Activated CD8-positive, alpha-beta T cell treated with anti-CD3 and anti-CD28 coated beads for 36 hours (primary cell): ENCODE measurements at regions of chr15 and their contacts with region 1.

Region 1: GRCh38 chr15:60326824-60327654 is 70.7 kb downstream of the ANXA2 start:
- DNase-seq: peak; percentile 47
- ATAC-seq: peak; percentile 39
- H3K4me3 Mint-ChIP-seq: no peak overlapping the region
- H3K27ac Mint-ChIP-seq: no peak overlapping the region
- H3K4me1 Mint-ChIP-seq: no peaks in the 10 kb centered on the region
- H3K27me3 Mint-ChIP-seq: peaks cover 26% of the 10 kb centered on the region
- CTCF ChIP-seq: peak; percentile 92

Region 2: DNA sequence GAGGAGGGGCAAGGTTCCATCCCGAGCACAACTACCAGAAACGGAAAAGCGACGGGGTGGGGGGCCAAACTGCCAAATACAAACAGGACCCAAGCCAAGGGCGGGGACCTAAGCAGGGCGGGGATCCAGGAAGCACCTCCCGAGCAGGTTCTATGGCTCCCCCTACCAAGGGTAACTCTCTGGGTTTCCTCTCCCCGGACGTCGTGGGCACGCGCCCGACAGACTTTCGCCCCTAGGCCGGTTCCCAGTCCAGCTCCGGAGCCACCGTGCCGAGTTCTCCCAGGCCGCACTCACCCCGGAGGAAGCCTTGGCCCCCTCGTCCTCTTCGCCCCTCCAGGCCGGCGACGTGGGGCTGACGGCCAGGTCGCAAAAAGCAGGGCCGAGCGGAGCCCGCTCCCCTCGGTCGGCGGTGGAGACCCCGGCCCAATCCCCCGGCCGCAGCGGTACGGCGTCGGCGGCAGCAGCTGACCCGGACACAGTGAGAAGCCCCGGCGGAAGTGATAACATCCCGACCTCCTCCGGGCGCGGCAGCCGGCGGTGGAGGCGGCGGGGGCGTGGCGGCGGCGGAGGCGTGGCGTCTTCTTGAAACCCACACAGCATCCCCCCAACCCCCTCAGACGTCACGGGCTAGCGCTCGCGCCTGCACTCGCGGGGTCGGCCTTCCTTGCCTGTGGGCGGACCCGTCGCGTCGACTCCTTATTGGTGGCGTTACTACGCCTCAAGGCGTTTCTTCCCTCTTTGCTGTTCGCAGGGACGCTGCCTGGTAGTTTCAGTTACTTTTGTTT is 638.0 kb before region 1 on chr15 and contains the start of gene BNIP2:
- CTCF ChIA-PET with region 1: interaction called, 12 read pairs
- POLR2A ChIA-PET with region 1: no interaction called
- intact Hi-C with region 1: no loop called
- DNase-seq: peak; percentile 99
- ATAC-seq: peak; percentile 90
- H3K4me3 Mint-ChIP-seq: peak within 1 kb of the TSS; percentile 85
- H3K27ac Mint-ChIP-seq: peak within 1 kb of the TSS; percentile 96
- H3K4me1 Mint-ChIP-seq: peaks cover 44% of the 10 kb centered on the region
- H3K27me3 Mint-ChIP-seq: no peaks in the 10 kb centered on the region
- CTCF ChIP-seq: no peak
- total RNA-seq, gene BNIP2: 52.2 to 53.2 TPM

Region 3: GRCh38 chr15:59741274-59741906 is 585.6 kb before region 1 on chr15:
- CTCF ChIA-PET with region 1: interaction called, 14 read pairs
- POLR2A ChIA-PET with region 1: no interaction called
- intact Hi-C with region 1: loop called (anchors 10 kb)
- DNase-seq: no peak
- ATAC-seq: no peak
- H3K4me3 Mint-ChIP-seq: no peak overlapping the region
- H3K27ac Mint-ChIP-seq: no peak overlapping the region
- H3K4me1 Mint-ChIP-seq: no peaks in the 10 kb centered on the region
- H3K27me3 Mint-ChIP-seq: no peaks in the 10 kb centered on the region
- CTCF ChIP-seq: no peak

Region 4: DNA sequence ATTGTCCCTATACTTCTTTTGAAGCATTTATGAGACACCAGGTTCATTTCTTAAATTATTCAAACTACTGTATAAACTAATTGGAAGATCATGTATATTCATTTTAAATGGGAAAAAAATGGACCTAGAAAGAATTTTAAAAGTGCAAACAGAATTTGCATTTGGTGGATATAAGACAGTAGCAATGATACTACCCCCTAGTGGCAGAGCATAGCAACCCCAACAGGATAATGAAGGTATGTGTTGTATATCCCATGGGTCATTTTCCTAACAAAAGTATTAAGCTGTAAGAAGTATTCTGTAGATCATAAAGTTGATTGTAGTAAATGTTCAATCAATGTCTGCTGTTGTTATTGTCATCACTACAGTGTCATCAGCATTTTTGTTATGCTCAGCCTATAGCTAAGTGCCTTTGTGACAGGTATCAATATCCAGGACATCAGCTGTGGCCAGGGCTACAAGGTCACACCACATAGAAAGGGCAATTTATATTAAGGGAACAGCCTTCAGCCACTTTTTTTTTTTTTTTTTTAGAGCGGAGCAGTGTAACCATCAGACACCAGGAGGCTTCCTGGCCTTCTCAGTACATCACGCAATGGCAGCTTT is 147.2 kb before region 1 on chr15:
- CTCF ChIA-PET with region 1: interaction called, 7 read pairs
- POLR2A ChIA-PET with region 1: no interaction called
- intact Hi-C with region 1: loop called (anchors 10 kb)
- DNase-seq: peak; percentile 61
- ATAC-seq: peak; percentile 68
- H3K4me3 Mint-ChIP-seq: no peak overlapping the region
- H3K27ac Mint-ChIP-seq: no peak overlapping the region
- H3K4me1 Mint-ChIP-seq: no peaks in the 10 kb centered on the region
- H3K27me3 Mint-ChIP-seq: peaks cover 15% of the 10 kb centered on the region
- CTCF ChIP-seq: peak; percentile 96

Region 5: DNA sequence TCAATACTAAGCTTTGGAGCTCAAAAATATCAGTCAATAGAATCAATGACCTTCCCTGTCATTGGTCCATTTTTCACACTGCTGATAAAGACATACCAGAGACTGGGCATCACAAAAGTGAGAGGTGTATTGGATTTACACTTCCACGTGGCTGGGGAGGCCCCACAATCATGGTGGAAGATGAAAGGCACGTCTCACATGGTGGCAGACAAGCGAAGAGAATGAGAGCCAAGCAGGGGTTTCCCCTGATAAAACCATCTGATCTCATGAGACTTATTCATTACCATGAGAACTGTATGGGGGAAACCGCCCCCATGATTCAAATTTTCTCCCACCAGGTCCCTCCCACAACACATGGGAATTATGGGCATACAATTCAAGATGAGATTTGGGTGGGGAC is 11.2 kb before region 1 on chr15:
- CTCF ChIA-PET with region 1: interaction called, 12 read pairs
- POLR2A ChIA-PET with region 1: no interaction called
- intact Hi-C with region 1: no loop called
- DNase-seq: peak; percentile 51
- ATAC-seq: peak; percentile 47
- H3K4me3 Mint-ChIP-seq: no peak overlapping the region
- H3K27ac Mint-ChIP-seq: no peak overlapping the region
- H3K4me1 Mint-ChIP-seq: peaks cover 6% of the 10 kb centered on the region
- H3K27me3 Mint-ChIP-seq: peaks cover 2% of the 10 kb centered on the region
- CTCF ChIP-seq: no peak

Region 6: DNA sequence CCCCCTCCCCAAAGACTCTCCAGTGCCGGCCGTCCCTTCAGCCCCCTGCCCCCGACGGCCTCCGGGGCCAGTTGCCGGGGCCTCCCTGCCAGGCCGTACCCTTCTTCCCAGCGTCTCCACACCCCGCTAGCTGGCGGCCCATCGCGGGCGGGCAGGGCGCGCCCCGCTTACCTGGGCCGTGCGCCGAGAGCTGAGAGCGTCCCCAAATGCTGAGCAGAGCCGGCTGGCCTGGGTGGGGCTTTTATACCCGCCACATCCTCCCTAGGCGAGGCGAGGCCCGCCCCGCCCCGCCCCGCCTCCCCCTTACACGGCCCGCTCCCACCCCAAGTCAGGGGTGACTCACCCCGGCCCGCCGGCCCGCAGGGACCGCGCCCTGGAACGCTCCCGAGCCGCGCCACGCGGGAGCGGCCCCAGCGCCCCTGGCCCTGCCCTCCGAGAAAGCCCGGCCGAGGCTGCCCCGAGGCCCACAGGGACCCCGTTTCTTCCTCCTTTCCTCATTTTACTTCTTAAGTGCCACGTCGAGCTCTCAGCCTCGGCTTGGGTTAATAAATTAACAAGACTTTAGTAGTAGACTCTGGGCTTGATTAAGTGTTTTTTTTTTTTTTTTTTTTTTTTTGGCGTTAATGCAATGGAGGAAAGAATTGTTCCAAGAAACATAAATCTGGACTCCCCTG is 70.9 kb after region 1 on chr15 and contains the start of gene ANXA2:
- CTCF ChIA-PET with region 1: no interaction called
- POLR2A ChIA-PET with region 1: no interaction called
- intact Hi-C with region 1: no loop called
- DNase-seq: peak; percentile 88
- ATAC-seq: peak; percentile 83
- H3K4me3 Mint-ChIP-seq: peak within 1 kb of the TSS; percentile 91
- H3K27ac Mint-ChIP-seq: peak within 1 kb of the TSS; percentile 92
- H3K4me1 Mint-ChIP-seq: peaks cover 36% of the 10 kb centered on the region
- H3K27me3 Mint-ChIP-seq: peaks cover 3% of the 10 kb centered on the region
- CTCF ChIP-seq: no peak
- total RNA-seq, gene ANXA2: 57.9 to 60.2 TPM